PC-3 (cell line): ENCODE measurements at regions of chr16 and their contacts with region 1.

Region 1: DNA sequence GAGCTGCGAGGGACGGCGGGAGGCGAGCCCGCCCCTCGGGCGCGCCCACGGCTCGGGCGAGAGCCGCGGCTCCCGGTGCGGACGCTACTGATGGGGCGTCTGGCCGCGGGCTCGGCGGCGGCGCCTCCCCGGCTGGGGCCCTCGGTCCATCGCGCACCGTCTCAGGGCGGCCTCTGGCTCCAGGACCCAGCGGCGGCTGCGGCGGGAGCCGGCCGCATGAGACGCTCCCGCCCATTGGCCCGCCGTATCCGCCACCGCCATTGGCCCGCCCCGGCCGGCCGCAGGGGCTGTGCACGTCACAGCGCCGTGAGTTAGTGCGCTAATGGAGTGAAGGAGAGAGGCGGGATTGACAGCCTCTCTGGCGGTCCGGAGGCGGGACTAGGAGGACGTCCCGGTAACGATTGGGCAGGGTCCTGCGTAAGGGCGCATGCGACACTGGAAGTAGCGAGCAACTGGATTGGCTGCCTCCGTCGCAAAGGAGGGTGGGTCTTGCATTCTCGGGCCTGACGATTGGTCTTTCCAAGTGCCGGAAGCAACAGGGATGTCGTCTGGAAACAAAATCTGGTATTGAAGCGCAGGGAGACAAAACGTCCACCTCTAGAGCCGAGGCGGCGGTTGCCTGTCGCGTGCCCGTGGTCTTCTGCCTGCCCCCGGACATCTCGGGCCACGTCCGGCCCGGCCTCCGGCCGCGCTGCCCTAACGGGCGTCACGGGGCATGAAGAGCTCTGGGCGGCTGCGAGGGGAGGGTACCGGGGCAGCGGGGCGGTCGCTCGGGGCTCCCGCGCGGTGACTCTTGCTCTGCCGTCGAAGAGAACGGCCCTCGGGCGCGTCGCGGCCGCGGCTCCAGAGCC is at the start of gene ANKRD11:
- DNase-seq: peak; percentile 98
- ATAC-seq: peak; percentile 96
- H3K4me3 ChIP-seq: peak within 1 kb of the TSS; percentile 94
- H3K27ac ChIP-seq: peak within 1 kb of the TSS; percentile 40
- H3K4me1 ChIP-seq: peaks cover 21% of the 10 kb centered on the region
- H3K27me3 ChIP-seq: no peaks in the 10 kb centered on the region
- CTCF ChIP-seq: no peak
- total RNA-seq, gene ANKRD11: 65.0 and 92.6 TPM in 2 replicates

Region 2: DNA sequence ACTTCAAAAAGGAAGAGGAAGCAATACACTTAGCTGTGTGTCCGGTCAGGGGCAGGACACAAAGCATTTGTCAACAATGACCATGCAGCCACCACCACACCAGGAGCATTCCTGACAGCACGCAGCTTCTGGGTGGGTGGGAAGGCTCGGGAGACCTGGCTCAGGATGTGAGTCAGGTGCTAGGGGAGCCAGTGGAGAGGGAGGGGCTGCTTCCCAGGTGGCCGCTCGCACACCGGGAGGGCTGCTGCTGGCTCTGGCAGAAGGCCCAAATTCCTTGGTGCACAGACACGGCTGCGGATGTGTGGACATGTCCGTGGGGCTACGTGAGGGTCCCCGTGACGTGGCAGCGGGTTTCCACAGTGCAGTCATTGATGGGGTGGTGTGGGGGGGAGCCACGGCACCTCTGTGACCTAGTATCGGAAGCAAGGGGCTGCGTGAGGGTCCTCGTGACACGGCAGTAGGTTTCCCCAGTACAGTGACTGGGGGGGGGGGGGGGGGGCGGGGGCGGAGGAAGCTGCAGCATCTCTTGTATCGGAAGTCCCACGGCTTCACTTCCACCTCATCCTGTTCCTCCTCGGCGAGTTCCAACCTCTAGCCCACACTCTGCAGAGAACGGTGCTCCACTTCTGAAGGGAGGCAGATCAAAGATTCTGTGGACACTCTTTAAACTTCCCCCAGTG is 160.3 kb before region 1 on chr16:
- CTCF ChIA-PET with region 1: no interaction called
- POLR2A ChIA-PET with region 1: no interaction called
- intact Hi-C with region 1: loop called (anchors 5 kb)
- DNase-seq: peak; percentile 94
- ATAC-seq: peak; percentile 83
- H3K4me3 ChIP-seq: peak overlapping the region; percentile 48; the same call in 1 of the 2 replicates
- H3K27ac ChIP-seq: peak overlapping the region; percentile 88
- H3K4me1 ChIP-seq: peaks cover 66% of the 10 kb centered on the region
- H3K27me3 ChIP-seq: no peaks in the 10 kb centered on the region
- CTCF ChIP-seq: no peak

Region 3: GRCh38 chr16:89363621-89364393 is 126.8 kb before region 1 on chr16:
- CTCF ChIA-PET with region 1: no interaction called
- POLR2A ChIA-PET with region 1: interaction called, 11 read pairs
- intact Hi-C with region 1: no loop called
- DNase-seq: peak; percentile 59
- ATAC-seq: peak; percentile 73
- H3K4me3 ChIP-seq: peak overlapping the region; percentile 17; the same call in 1 of the 2 replicates
- H3K27ac ChIP-seq: peak overlapping the region; percentile 97
- H3K4me1 ChIP-seq: peaks cover 26% of the 10 kb centered on the region
- H3K27me3 ChIP-seq: no peaks in the 10 kb centered on the region
- CTCF ChIP-seq: no peak

Region 4: GRCh38 chr16:89431158-89431584 is 59.4 kb before region 1 on chr16:
- CTCF ChIA-PET with region 1: no interaction called
- POLR2A ChIA-PET with region 1: no interaction called
- intact Hi-C with region 1: loop called (anchors 10 kb)
- DNase-seq: no peak
- ATAC-seq: peak; percentile 64
- H3K4me3 ChIP-seq: no peak overlapping the region
- H3K27ac ChIP-seq: no peak overlapping the region
- H3K4me1 ChIP-seq: no peaks in the 10 kb centered on the region
- H3K27me3 ChIP-seq: no peaks in the 10 kb centered on the region
- CTCF ChIP-seq: no peak

Region 5: DNA sequence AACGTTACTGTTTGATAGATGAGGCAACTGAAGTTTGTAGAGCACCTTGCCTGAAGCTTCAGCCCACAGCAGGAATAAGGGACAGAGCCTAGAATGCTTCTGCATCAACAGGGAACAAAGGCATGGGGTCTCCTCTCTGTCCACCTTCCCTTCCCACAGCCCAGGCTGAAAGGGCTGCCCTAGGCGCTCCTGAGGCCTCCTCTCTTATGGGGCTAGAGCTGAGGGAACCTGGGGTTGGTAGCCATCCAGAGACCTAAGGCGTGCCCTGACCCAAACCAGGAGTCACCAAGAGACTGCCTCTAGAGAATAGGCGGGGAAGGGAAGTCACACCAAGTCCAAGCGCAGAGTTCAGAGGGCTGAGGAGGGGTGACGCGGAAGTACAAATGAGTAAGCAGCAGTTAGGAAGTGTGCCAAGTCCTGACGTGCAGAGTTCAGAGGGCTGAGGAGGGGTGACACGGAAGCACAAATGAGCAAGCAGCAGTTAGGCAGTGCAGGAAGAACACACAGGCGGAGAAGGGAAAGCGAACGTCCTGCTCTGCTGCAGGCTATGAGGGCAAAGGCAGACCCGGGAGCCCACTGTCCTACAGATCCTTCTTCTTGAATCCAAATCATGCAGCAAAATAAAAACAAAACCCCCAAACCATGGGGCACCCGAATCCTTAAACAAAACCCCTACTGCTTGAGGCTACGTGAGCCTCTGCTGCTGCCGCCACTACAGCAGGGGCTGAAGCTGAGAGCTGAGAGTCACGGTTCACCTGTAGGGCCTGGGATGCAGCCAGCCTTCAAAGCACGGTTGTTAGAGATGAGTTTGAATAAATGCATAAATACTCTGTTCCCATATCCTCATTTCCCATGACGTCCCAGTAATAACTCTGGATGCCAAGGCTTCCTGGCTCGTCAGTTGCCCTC is 14.8 kb after region 1 on chr16:
- CTCF ChIA-PET with region 1: no interaction called
- POLR2A ChIA-PET with region 1: interaction called, 3 read pairs
- intact Hi-C with region 1: loop called (anchors 2 kb)
- DNase-seq: peak; percentile 90
- ATAC-seq: peak; percentile 32
- H3K4me3 ChIP-seq: peak overlapping the region; percentile 23; the same call in 1 of the 2 replicates
- H3K27ac ChIP-seq: peak overlapping the region; percentile 89
- H3K4me1 ChIP-seq: peaks cover 39% of the 10 kb centered on the region
- H3K27me3 ChIP-seq: no peaks in the 10 kb centered on the region
- CTCF ChIP-seq: no peak